Mammary epithelial cell (primary cell): ENCODE measurements at regions of chr1 and their contacts with region 1.

Region 1: DNA sequence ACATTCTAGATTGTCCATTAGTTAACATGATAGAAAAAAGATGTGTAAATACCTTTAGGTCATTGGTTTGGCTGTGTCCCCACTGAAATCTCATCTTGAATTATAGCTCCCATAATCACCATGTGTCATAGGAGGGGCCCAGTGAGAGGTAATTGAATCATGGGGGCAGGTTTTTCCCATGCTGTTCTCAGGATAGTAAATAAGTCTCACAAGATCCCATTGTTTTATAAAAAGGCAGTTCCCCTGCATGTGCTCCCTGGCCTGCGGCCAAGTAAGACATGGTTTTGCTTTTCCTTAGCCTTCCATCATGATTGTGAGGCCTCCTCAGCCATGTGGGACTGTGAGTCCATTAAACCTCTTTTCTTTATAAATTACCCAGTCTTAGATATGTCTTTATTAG is 32.5 kb upstream of the SLC44A5 start:
- DNase-seq: peak; percentile 22
- H3K4me3 ChIP-seq: no peak overlapping the region
- H3K27ac ChIP-seq: no peak overlapping the region
- H3K4me1 ChIP-seq: no peaks in the 10 kb centered on the region
- H3K27me3 ChIP-seq: peaks cover 2% of the 10 kb centered on the region
- CTCF ChIP-seq: no peak

Region 2: GRCh38 chr1:75539230-75540116 is 104.0 kb before region 1 on chr1:
- CTCF ChIA-PET with region 1: no interaction called
- dilution Hi-C with region 1: no loop called
- in situ Hi-C with region 1: no loop called
- intact Hi-C with region 1: loop called (anchors 10 kb)
- DNase-seq: no peak
- H3K4me3 ChIP-seq: no peak overlapping the region
- H3K27ac ChIP-seq: no peak overlapping the region
- H3K4me1 ChIP-seq: no peaks in the 10 kb centered on the region
- H3K27me3 ChIP-seq: no peaks in the 10 kb centered on the region
- CTCF ChIP-seq: no peak